CD4-positive, alpha-beta T cell (primary cell): ENCODE measurements at regions of chr3 and their contacts with region 1.

Region 1: GRCh38 chr3:131033480-131034080 is 6.9 kb downstream of the NEK11 start:
- DNase-seq: peak in 5 of 14 experiments; percentile 9 to 77 (median 70)
- ATAC-seq: peak; percentile 74
- H3K4me3 ChIP-seq: no peak overlapping the region
- H3K4me3 Mint-ChIP-seq: no peak overlapping the region
- H3K27ac ChIP-seq: no peak overlapping the region
- H3K27ac Mint-ChIP-seq: no peak overlapping the region
- H3K4me1 ChIP-seq: no peaks in the 10 kb centered on the region
- H3K4me1 Mint-ChIP-seq: no peaks in the 10 kb centered on the region
- H3K27me3 ChIP-seq: no peaks in the 10 kb centered on the region
- H3K27me3 Mint-ChIP-seq: no peaks in the 10 kb centered on the region
- CTCF ChIP-seq: peak; percentile 68

Region 2: DNA sequence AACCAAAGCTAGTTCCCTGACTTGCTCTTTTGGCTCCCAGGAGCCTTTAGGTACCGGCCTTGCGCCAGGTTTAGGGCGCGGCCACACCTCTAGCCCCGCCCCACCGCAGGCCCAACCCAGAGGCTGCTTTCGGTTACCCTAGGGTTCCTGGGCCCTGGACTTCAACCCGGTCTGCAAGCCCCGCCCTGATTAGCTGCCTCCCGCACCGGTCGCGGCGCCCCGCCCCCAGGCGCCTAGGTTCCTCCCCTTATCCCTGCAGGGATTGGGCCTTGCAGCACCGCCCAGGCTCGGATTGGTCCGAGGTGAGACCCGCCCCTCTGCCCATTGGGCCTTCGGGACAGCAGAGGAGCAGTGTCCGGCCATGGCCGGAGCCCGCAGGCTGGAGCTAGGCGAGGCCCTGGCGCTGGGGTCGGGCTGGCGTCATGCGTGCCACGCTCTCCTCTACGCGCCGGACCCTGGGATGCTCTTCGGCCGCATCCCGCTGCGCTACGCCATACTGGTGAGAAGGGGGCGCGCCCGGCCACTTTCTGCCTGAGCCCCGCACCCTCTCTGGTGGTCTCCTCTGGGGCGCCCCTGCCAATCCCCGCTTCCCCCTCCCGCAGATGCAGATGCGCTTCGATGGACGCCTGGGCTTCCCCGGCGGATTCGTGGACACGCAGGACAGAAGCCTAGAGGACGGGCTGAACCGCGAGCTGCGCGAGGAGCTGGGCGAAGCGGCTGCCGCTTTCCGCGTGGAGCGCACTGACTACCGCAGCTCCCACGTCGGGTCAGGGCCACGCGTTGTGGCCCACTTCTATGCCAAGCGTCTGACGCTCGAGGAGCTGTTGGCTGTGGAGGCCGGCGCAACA is 348.1 kb after region 1 on chr3 and contains the start of gene NUDT16:
- CTCF ChIA-PET with region 1: no interaction called
- POLR2A ChIA-PET with region 1: interaction called, 6 read pairs
- intact Hi-C with region 1: loop called (anchors 5 to 10 kb)
- DNase-seq: peak; percentile 91 to 98 (median 96)
- ATAC-seq: peak; percentile 96
- H3K4me3 ChIP-seq: peak within 1 kb of the TSS; percentile 98
- H3K4me3 Mint-ChIP-seq: peak within 1 kb of the TSS; percentile 98
- H3K27ac ChIP-seq: peak within 1 kb of the TSS in 1 of 2 donors; percentile 11
- H3K27ac Mint-ChIP-seq: peak within 1 kb of the TSS; percentile 91
- H3K4me1 ChIP-seq: peaks cover 36% of the 10 kb centered on the region
- H3K4me1 Mint-ChIP-seq: peaks cover 48% of the 10 kb centered on the region
- H3K27me3 ChIP-seq: no peaks in the 10 kb centered on the region
- H3K27me3 Mint-ChIP-seq: no peaks in the 10 kb centered on the region
- CTCF ChIP-seq: peak; percentile 14
- total RNA-seq, gene NUDT16: 4.7 to 5.7 TPM

Region 3: GRCh38 chr3:131772269-131773026 is 738.9 kb after region 1 on chr3:
- CTCF ChIA-PET with region 1: no interaction called
- POLR2A ChIA-PET with region 1: no interaction called
- intact Hi-C with region 1: no loop called
- DNase-seq: no peak
- ATAC-seq: no peak
- H3K4me3 ChIP-seq: no peak overlapping the region
- H3K4me3 Mint-ChIP-seq: no peak overlapping the region
- H3K27ac ChIP-seq: no peak overlapping the region
- H3K27ac Mint-ChIP-seq: no peak overlapping the region
- H3K4me1 ChIP-seq: no peaks in the 10 kb centered on the region
- H3K4me1 Mint-ChIP-seq: no peaks in the 10 kb centered on the region
- H3K27me3 ChIP-seq: peaks cover 3 to 5% of the 10 kb centered on the region in 2 experiments
- H3K27me3 Mint-ChIP-seq: peaks cover 15% of the 10 kb centered on the region
- CTCF ChIP-seq: no peak

Region 4: GRCh38 chr3:132029182-132029902 is 995.8 kb after region 1 on chr3:
- CTCF ChIA-PET with region 1: interaction called, 3 read pairs
- POLR2A ChIA-PET with region 1: no interaction called
- intact Hi-C with region 1: loop called (anchors 2 to 5 kb)
- DNase-seq: peak; percentile 18 to 67 (median 36)
- ATAC-seq: no peak
- H3K4me3 ChIP-seq: no peak overlapping the region
- H3K4me3 Mint-ChIP-seq: no peak overlapping the region
- H3K27ac ChIP-seq: no peak overlapping the region
- H3K27ac Mint-ChIP-seq: no peak overlapping the region
- H3K4me1 ChIP-seq: peaks cover 5% of the 10 kb centered on the region
- H3K4me1 Mint-ChIP-seq: peaks cover 3% of the 10 kb centered on the region
- H3K27me3 ChIP-seq: peaks cover 15 to 40% of the 10 kb centered on the region in 2 experiments
- H3K27me3 Mint-ChIP-seq: peaks cover 71% of the 10 kb centered on the region
- CTCF ChIP-seq: peak; percentile 49

Region 5: GRCh38 chr3:132343018-132343612 is 1309.5 kb after region 1 on chr3:
- CTCF ChIA-PET with region 1: interaction called, 3 read pairs
- POLR2A ChIA-PET with region 1: no interaction called
- intact Hi-C with region 1: loop called (anchors 5 kb)
- DNase-seq: peak in 4 of 14 experiments; percentile 19 to 61 (median 48)
- ATAC-seq: no peak
- H3K4me3 ChIP-seq: no peak overlapping the region
- H3K4me3 Mint-ChIP-seq: no peak overlapping the region
- H3K27ac ChIP-seq: no peak overlapping the region
- H3K27ac Mint-ChIP-seq: no peak overlapping the region
- H3K4me1 ChIP-seq: no peaks in the 10 kb centered on the region
- H3K4me1 Mint-ChIP-seq: no peaks in the 10 kb centered on the region
- H3K27me3 ChIP-seq: peaks cover 0 to 6% of the 10 kb centered on the region in 2 experiments
- H3K27me3 Mint-ChIP-seq: peaks cover 25% of the 10 kb centered on the region
- CTCF ChIP-seq: peak; percentile 71